Heart right ventricle (tissue), 16 donors: ENCODE measurements at regions of chr3 and their contacts with region 1.

Region 1: GRCh38 chr3:108011616-108012015 is 79.2 kb downstream of the CD47 start:
- DNase-seq: no peak
- ATAC-seq: no peak
- H3K4me3 ChIP-seq: no peak overlapping the region
- H3K27ac ChIP-seq: no peak overlapping the region
- H3K4me1 ChIP-seq: peaks cover 0 to 24% (median 7%) of the 10 kb centered on the region in 9 donors
- H3K27me3 ChIP-seq: no peaks in the 10 kb centered on the region
- CTCF ChIP-seq: no peak

Region 2: DNA sequence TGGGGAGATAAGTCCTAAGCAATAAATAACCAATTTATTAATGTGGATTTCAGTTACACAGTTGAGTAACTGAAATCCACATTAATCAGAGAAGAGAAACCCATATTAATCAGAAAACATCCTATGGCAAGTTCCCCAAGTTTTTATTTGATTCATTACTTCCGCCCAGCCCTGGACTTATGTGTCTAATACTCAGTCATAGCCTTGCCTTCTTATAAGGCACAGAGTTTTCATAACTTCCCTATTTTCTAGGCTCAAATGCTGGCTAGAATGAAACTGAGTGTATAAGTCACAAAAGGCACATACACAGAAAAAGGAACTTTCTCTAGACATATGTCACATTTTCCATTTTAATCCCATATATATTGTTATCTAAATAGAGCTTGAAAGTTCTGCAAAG is 50.4 kb after region 1 on chr3:
- intact Hi-C with region 1: loop called in 1 of 10 experiments (anchors 5 kb)
- DNase-seq: no peak
- ATAC-seq: no peak
- H3K4me3 ChIP-seq: no peak overlapping the region
- H3K27ac ChIP-seq: peak overlapping the region in 1 of 10 donors; percentile 28
- H3K4me1 ChIP-seq: peaks cover 0 to 26% (median 4%) of the 10 kb centered on the region in 9 donors
- H3K27me3 ChIP-seq: no peaks in the 10 kb centered on the region
- CTCF ChIP-seq: no peak